Activated naive CD4-positive, alpha-beta T cell treated with anti-CD3 and anti-CD28 coated beads for 36 hours (primary cell): ENCODE measurements at regions of chr12 and their contacts with region 1.

Region 1: DNA sequence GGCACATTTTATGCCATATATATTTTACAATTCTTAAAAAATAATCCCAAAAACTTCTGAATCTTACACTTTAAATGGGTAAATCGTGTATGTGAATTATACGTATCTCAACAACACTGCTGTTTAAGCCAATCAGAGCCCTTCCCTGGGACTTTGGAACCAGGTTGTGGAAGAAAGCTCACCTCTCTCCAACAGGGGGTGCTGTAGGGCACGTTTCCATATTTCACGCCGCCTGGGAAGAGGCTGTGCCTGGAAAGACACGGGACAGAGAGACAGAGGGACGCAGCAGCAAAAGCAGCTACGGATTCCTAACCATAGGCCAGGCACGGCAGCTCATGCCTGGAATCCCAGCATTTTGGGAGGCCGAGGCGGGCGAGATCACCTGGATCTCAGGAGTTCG is 29.4 kb upstream of the FBRSL1 start:
- DNase-seq: peak; percentile 38
- H3K4me3 Mint-ChIP-seq: no peak overlapping the region
- H3K27ac Mint-ChIP-seq: no peak overlapping the region
- H3K4me1 Mint-ChIP-seq: peaks cover 6% of the 10 kb centered on the region
- H3K27me3 Mint-ChIP-seq: no peaks in the 10 kb centered on the region

Region 2: DNA sequence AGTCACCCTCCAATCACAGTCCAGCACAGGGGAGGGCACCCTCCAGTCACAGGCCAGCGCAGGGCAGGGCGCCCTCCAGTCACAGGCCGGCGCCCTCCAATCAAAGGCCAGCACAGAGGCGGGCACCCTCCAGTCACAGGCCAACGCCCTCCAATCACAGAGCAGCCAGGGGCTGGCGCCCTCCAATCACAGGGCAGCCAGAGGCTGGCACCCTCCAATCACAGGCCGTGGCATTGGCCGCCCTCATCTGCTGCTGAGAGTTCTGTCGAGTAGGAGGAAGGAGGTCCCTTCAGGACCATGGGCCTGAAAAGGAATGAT is 343.1 kb before region 1 on chr12:
- CTCF ChIA-PET with region 1: no interaction called
- intact Hi-C with region 1: no loop called
- DNase-seq: no peak
- H3K4me3 Mint-ChIP-seq: no peak overlapping the region
- H3K27ac Mint-ChIP-seq: no peak overlapping the region
- H3K4me1 Mint-ChIP-seq: no peaks in the 10 kb centered on the region
- H3K27me3 Mint-ChIP-seq: no peaks in the 10 kb centered on the region

Region 3: DNA sequence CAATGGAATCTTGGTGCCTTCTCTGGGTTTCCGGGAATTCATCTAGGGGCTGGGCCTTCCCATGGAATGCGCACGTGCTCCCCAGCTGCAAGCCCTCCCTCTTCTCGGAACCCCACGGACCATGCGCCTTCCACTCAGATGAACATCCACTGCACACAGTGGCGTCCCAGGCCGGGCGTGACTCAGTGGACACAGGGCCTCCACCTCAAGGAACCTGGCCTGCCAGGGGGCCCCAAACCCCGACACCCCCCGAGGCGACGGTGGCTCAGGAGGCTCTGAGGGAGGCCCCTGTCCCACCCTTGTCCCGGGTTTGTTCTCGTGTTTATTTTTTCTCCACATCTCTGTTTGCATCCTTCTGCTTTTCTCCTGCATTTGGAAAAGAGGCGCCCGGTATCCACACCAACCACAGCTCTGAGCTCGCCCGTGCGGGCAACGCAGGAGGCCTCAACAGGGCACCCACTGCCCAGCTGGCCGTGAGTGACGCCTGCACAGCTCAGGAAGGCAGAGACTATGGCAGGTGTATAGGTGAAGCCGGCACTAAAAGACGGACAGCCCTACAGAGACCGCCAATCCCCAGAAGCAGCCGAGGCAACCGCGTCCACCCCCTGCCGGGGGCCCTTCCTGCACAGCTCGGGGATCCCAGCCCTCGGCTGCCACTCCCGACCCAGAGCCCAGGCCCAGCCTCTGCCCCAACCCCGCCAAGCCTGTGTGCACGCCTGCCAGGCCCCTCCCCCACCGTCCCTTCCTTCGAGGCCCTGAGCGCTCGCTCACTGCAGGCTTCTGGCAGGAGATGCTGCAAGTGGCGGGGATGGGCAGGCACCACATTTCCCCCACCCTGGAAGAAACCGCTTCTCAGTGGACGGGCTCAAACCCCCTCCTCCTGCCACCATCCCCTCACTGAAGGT is 107.4 kb before region 1 on chr12:
- CTCF ChIA-PET with region 1: no interaction called
- intact Hi-C with region 1: no loop called
- DNase-seq: no peak
- H3K4me3 Mint-ChIP-seq: no peak overlapping the region
- H3K27ac Mint-ChIP-seq: no peak overlapping the region
- H3K4me1 Mint-ChIP-seq: peaks cover 3% of the 10 kb centered on the region
- H3K27me3 Mint-ChIP-seq: peaks cover 3% of the 10 kb centered on the region

Region 4: DNA sequence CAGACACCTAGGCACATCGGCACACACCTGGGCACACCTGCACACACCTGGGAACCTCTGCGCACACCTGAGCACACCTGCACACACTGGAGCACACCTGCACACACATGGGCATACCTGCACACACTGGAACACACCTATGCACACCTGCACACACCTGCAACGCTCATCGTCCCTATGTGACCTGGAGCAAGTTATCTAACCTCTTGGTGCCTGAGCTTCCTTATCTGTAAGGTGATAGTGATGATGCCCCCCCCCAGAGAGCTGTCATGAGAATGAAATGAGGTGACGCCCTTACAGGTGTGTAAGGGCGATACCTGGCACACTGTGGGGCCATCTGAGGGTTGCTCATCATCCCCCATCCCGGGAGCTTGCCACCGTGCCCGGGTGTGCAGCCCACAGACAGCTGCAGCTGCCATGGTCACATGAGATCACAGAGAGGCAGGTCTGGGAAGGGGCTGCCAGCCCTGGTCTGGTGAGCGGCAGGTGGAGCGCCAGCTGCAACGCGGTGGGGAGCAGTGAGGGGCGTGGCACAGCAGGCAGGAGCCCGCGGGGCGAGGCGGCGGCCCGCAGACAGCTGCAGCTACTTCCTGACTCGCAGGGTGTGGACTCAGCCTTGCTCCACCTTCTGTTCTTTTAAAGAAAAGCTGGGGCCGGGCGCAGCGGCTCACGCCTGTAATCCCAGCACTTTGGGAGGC is 30.5 kb before region 1 on chr12:
- CTCF ChIA-PET with region 1: no interaction called
- intact Hi-C with region 1: no loop called
- DNase-seq: peak; percentile 71
- H3K4me3 Mint-ChIP-seq: peak overlapping the region; percentile 59
- H3K27ac Mint-ChIP-seq: no peak overlapping the region
- H3K4me1 Mint-ChIP-seq: peaks cover 20% of the 10 kb centered on the region
- H3K27me3 Mint-ChIP-seq: no peaks in the 10 kb centered on the region

Region 5: DNA sequence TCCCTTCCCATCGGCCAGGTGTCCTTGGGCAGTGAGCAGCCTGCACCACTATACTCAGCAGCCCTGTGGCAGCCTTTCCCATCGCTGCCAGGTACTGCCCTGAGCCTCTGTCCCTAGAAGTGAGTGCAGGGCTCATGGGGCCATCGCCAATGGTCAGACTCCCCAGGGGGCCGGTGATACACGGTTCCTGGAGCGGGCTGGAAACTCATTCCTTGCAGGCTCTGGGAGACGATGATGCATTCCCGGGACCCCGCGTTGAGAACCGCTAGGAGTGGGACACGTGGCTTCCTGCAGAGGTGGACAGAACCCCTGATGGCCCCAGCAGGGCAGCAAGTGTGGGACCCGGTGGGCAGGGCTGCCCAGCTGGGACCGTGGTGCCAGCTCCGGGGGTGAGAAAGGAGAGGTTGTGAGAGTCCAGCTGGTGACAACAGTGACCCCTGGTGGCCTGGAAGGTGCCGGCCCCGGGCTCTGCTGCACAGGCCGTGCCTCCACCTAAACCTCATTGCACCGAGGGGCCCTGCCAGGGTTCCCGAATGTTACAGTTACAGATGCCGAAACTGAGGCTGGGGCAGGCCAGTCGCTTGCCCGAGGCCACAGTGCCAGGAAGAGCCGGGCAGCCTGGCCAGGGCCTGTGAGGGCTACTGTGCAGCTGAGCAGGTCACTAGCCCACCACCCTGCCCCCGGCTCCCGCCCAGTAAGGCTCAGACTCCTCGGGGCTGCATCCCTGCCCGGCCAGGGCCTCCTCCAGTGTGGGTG is 63.2 kb after region 1 on chr12:
- CTCF ChIA-PET with region 1: interaction called, 7 read pairs
- intact Hi-C with region 1: loop called (anchors 1 kb)
- DNase-seq: peak; percentile 83
- H3K4me3 Mint-ChIP-seq: no peak overlapping the region
- H3K27ac Mint-ChIP-seq: no peak overlapping the region
- H3K4me1 Mint-ChIP-seq: peaks cover 9% of the 10 kb centered on the region
- H3K27me3 Mint-ChIP-seq: no peaks in the 10 kb centered on the region

Region 6: GRCh38 chr12:132593521-132594358 is 133.2 kb after region 1 on chr12:
- CTCF ChIA-PET with region 1: no interaction called
- intact Hi-C with region 1: no loop called
- DNase-seq: no peak
- H3K4me3 Mint-ChIP-seq: no peak overlapping the region
- H3K27ac Mint-ChIP-seq: no peak overlapping the region
- H3K4me1 Mint-ChIP-seq: peaks cover 10% of the 10 kb centered on the region
- H3K27me3 Mint-ChIP-seq: peaks cover 19% of the 10 kb centered on the region